K562 (cell line): ENCODE measurements at regions of chr17 and their contacts with region 1.

Region 1: GRCh38 chr17:78019367-78019975 is 61.0 kb downstream of the TNRC6C start:
- DNase-seq: peak in 2 of 4 experiments; percentile 23 to 66
- ATAC-seq: peak; percentile 64
- H3K4me3 ChIP-seq: no peak overlapping the region
- H3K27ac ChIP-seq: no peak overlapping the region; the same call in 2 of the 3 replicates
- H3K4me1 ChIP-seq: peaks cover 11 to 34% of the 10 kb centered on the region in 2 experiments; a peak in 4 of 5 replicates
- H3K27me3 ChIP-seq: no peaks in the 10 kb centered on the region
- CTCF ChIP-seq: peak; percentile 38 to 83 (median 60); a peak in 4 of 6 replicates
- EP300 ChIP-seq: 0 out of 2 replicates have a peak, but pooled peaks have one; percentile 5
- POLR2A ChIP-seq: no peak
- RAD21 ChIP-seq: peak; percentile 67 to 82

Region 2: DNA sequence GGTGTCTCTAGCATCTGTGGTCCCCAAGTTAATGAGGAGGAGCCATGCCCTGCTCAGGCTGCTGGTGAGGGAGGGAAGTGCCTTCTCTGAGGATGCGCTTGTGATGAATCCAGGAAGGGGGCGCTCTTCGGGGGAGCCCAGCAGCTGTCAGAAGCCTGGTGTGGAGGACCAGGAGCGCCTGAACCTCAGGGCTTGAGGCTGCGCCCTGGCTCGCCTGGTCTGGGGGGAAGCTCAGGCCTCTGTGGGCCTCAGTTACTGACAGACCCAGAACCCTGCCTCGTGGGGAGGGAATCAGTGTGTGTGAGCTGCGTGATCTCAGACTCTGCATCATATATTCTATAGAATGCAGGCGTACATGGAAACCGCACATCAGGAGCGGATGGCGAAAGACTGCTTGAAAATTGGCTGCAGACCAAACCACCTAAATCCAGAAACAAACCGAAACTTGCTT is 752.6 kb before region 1 on chr17:
- CTCF ChIA-PET with region 1: no interaction called
- POLR2A ChIA-PET with region 1: no interaction called
- in situ Hi-C with region 1: no loop called
- intact Hi-C with region 1: no loop called
- DNase-seq: peak; percentile 57 to 74 (median 64)
- ATAC-seq: peak; percentile 96
- H3K4me3 ChIP-seq: no peak overlapping the region
- H3K27ac ChIP-seq: no peak overlapping the region
- H3K4me1 ChIP-seq: peaks cover 0 to 10% of the 10 kb centered on the region in 2 experiments; a peak in 2 of 5 replicates
- H3K27me3 ChIP-seq: peaks cover 5 to 19% of the 10 kb centered on the region in 2 experiments; a peak in 4 of 5 replicates
- CTCF ChIP-seq: peak; percentile 70 to 86 (median 82)
- EP300 ChIP-seq: no peak
- POLR2A ChIP-seq: no peak
- RAD21 ChIP-seq: peak in 1 of 2 experiments; percentile 51; a peak in 2 of 4 replicates

Region 3: DNA sequence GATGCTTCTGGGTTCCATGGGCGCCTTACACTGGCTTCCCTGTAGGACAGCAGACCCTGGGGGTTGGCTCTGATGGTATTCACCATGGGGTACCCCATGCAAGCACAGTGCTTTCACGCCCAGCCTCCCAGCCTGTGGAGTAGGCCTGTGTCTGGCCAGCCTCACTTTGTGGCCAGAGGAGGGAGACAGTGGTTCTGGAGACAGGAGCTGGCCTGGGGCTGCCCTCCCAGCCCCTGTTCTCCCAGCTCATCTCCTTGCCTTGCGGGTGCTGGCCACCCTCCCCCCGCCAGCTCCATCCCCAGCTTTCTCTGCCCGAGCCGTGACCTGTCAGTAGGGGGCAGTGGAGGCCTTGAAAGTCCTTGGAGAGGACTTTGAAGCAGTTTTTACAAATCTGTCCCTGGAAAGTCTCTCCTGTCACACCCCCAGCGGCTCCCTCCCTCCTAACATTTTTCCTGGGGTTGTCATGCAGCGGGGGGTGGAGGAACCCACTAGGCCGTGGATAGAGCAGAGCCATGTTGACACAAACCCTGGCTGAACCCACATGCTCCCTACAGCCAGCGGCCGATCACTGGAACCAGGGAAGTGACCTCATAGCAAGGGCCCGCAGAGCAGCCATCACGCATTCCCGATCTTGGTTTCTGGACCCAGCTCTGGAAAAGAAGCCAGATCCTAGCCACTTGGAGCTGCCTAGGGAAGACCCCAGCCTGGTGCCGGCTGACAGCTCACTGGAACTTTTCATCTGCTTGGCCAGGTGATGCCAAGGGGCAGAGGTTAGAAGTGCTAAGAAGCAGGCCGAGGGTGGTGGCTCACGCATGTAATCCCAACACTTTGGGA is 589.3 kb before region 1 on chr17:
- CTCF ChIA-PET with region 1: no interaction called
- POLR2A ChIA-PET with region 1: no interaction called
- in situ Hi-C with region 1: no loop called
- intact Hi-C with region 1: no loop called
- DNase-seq: peak; percentile 79 to 88 (median 81)
- ATAC-seq: peak; percentile 83
- H3K4me3 ChIP-seq: no peak overlapping the region
- H3K27ac ChIP-seq: no peak overlapping the region
- H3K4me1 ChIP-seq: peaks cover 37 to 68% of the 10 kb centered on the region in 2 experiments
- H3K27me3 ChIP-seq: no peaks in the 10 kb centered on the region
- CTCF ChIP-seq: peak; percentile 84 to 88 (median 87)
- EP300 ChIP-seq: 0 out of 2 replicates have a peak, but pooled peaks have one; percentile 30
- POLR2A ChIP-seq: no peak
- RAD21 ChIP-seq: peak; percentile 81 to 87

Region 4: GRCh38 chr17:77692571-77693161 is 326.8 kb before region 1 on chr17:
- CTCF ChIA-PET with region 1: no interaction called
- POLR2A ChIA-PET with region 1: no interaction called
- in situ Hi-C with region 1: no loop called
- intact Hi-C with region 1: no loop called
- DNase-seq: no peak
- ATAC-seq: no peak
- H3K4me3 ChIP-seq: no peak overlapping the region
- H3K27ac ChIP-seq: no peak overlapping the region
- H3K4me1 ChIP-seq: no peaks in the 10 kb centered on the region
- H3K27me3 ChIP-seq: peaks cover 39 to 72% of the 10 kb centered on the region in 2 experiments
- CTCF ChIP-seq: no peak
- EP300 ChIP-seq: no peak
- POLR2A ChIP-seq: no peak
- RAD21 ChIP-seq: no peak

Region 5: DNA sequence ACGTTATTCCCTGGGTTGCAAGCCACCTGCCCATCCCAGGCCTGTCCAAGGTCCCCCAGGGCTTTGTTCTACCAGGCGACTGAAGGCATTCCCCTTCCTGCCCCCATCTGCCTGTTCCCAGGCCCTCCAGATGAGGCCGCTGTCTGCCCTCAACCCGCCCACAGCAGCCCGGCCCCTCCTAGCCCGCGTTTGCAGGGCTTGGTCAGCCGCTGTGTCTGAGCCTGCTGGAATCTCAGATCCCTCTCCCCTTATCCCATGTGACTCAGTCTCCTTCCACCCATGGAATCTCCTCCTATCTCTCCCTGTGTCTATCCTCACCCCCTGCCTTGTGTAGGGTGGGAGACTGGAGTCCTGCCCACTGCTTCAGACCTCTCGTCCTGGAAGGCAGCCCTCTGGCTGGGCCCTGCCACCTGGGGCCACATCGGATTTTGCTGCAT is 247.0 kb before region 1 on chr17:
- CTCF ChIA-PET with region 1: interaction called, 19 read pairs
- POLR2A ChIA-PET with region 1: no interaction called
- in situ Hi-C with region 1: loop called (anchors 5 kb)
- intact Hi-C with region 1: no loop called
- DNase-seq: peak; percentile 76 to 89 (median 84)
- ATAC-seq: peak; percentile 98
- H3K4me3 ChIP-seq: no peak overlapping the region
- H3K27ac ChIP-seq: no peak overlapping the region
- H3K4me1 ChIP-seq: peaks cover 12 to 25% of the 10 kb centered on the region in 2 experiments; a peak in 4 of 5 replicates
- H3K27me3 ChIP-seq: peaks cover 11 to 51% of the 10 kb centered on the region in 2 experiments
- CTCF ChIP-seq: peak; percentile 89 to 93 (median 90)
- EP300 ChIP-seq: no peak
- POLR2A ChIP-seq: no peak
- RAD21 ChIP-seq: peak; percentile 74 to 91

Region 6: GRCh38 chr17:77846531-77847085 is 172.9 kb before region 1 on chr17:
- CTCF ChIA-PET with region 1: no interaction called
- POLR2A ChIA-PET with region 1: no interaction called
- in situ Hi-C with region 1: no loop called
- intact Hi-C with region 1: loop called (anchors 5 kb)
- DNase-seq: no peak
- ATAC-seq: no peak; the same call in 2 of the 3 replicates
- H3K4me3 ChIP-seq: no peak overlapping the region
- H3K27ac ChIP-seq: no peak overlapping the region
- H3K4me1 ChIP-seq: peaks cover 5 to 6% of the 10 kb centered on the region in 2 experiments
- H3K27me3 ChIP-seq: peaks cover 0 to 7% of the 10 kb centered on the region in 2 experiments; a peak in 3 of 5 replicates
- CTCF ChIP-seq: no peak
- EP300 ChIP-seq: no peak
- POLR2A ChIP-seq: no peak
- RAD21 ChIP-seq: no peak

Region 7: GRCh38 chr17:78082988-78083387 is 63.5 kb after region 1 on chr17:
- CTCF ChIA-PET with region 1: no interaction called
- POLR2A ChIA-PET with region 1: no interaction called
- in situ Hi-C with region 1: no loop called
- intact Hi-C with region 1: loop called (anchors 1 kb)
- DNase-seq: peak in 1 of 4 experiments; percentile 29
- ATAC-seq: no peak
- H3K4me3 ChIP-seq: no peak overlapping the region
- H3K27ac ChIP-seq: 0 out of 3 replicates have a peak overlapping the region, but pooled peaks have one; percentile 20
- H3K4me1 ChIP-seq: peaks cover 21 to 23% of the 10 kb centered on the region in 2 experiments; a peak in 4 of 5 replicates
- H3K27me3 ChIP-seq: no peaks in the 10 kb centered on the region
- CTCF ChIP-seq: no peak
- EP300 ChIP-seq: no peak
- POLR2A ChIP-seq: no peak
- RAD21 ChIP-seq: no peak

Region 8: DNA sequence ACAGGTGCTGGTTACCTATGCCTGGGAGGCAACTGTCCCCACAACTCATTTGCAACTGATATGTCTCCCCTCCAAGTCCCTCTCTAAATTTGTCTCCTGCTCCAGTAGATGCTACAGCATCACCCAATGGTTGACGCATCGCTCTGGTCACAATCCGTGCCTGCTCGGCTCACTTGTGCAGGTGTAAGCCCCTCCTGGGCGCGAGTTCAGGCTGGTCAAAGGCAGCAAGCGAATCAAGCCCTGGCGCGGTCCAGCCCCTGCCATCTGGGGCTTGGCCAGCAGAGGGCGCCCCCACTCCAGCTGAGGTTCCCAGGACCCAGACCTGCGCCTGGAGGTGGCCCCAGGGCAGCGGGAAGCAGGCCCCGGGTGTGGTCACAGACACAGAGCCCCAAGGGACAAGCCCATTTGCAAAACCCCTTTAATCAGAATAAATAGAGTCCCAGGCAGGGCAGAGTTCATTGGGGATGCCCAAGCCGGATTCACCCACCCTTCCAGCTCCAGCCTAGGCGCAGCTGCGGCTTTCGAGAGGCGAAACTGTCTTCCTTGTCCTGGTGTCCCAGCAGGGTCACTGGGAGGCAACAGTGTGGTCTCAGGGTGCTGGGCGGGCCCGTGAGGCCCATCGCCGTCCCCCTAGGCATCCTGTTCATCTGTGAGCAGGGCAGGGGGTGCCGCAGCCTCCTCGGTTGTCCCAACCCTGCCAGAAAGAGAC is 93.2 kb after region 1 on chr17:
- CTCF ChIA-PET with region 1: no interaction called
- POLR2A ChIA-PET with region 1: interaction called, 3 read pairs
- in situ Hi-C with region 1: no loop called
- intact Hi-C with region 1: loop called (anchors 1 kb)
- DNase-seq: peak; percentile 80 to 88 (median 84)
- ATAC-seq: peak; percentile 92
- H3K4me3 ChIP-seq: no peak overlapping the region
- H3K27ac ChIP-seq: 0 out of 3 replicates have a peak overlapping the region, but pooled peaks have one; percentile 34
- H3K4me1 ChIP-seq: peaks cover 0 to 52% of the 10 kb centered on the region in 2 experiments; a peak in 2 of 5 replicates
- H3K27me3 ChIP-seq: no peaks in the 10 kb centered on the region
- CTCF ChIP-seq: peak; percentile 94 to 97 (median 95)
- EP300 ChIP-seq: no peak
- POLR2A ChIP-seq: peak; percentile 75
- RAD21 ChIP-seq: peak; percentile 93

Region 9: DNA sequence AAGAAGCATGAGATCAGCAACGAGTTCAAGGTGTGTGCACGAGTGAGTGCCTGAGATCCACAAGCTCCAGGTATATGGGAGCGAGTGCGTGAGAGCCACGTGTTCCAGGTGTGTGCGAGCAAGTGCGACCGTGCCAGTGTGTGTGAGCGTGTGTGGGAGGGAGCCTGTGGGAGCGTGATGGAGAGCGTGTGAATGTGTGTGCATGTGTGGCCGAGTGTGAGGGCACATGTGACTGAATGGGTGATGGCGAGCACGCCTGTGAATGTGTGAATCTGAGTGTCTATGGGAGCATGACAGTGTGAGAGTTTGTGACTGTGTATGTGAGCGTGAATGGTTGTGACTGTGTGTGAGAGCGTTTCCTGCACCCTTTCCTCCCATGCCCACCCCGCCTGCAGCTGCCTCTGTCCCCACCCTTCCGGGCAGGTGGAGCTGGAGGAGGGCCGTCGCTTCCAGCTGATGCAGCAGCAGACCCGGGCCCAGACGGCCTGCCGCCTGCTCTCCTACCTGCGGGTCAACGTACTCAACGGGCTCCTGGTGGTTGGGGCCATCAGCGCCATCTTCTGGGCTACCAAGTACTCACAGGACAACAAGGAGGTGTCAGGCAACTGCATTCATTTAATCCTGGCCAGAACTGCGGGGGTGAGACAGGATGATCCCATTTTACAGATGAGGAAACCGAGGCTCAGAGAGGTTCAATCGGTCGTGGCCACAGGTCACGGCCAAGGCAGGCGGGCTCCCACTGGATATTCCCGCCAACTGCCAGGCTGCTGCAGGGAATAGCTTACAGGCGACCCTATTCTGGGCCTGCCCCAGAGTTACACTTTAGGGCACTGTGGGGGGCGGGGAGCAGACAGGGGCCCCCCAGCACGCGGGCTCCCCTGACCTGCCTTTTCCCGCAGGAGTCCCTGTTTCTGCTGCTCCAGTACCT is 114.8 kb after region 1 on chr17:
- CTCF ChIA-PET with region 1: interaction called, 3 read pairs
- POLR2A ChIA-PET with region 1: no interaction called
- in situ Hi-C with region 1: no loop called
- intact Hi-C with region 1: loop called (anchors 2 kb)
- DNase-seq: peak; percentile 52 to 88 (median 64)
- ATAC-seq: peak; percentile 59
- H3K4me3 ChIP-seq: no peak overlapping the region
- H3K27ac ChIP-seq: no peak overlapping the region
- H3K4me1 ChIP-seq: peaks cover 70 to 100% of the 10 kb centered on the region in 2 experiments
- H3K27me3 ChIP-seq: no peaks in the 10 kb centered on the region
- CTCF ChIP-seq: peak; percentile 80 to 84 (median 81)
- EP300 ChIP-seq: no peak
- POLR2A ChIP-seq: no peak
- RAD21 ChIP-seq: peak; percentile 41 to 73; a peak in 3 of 4 replicates

Region 10: DNA sequence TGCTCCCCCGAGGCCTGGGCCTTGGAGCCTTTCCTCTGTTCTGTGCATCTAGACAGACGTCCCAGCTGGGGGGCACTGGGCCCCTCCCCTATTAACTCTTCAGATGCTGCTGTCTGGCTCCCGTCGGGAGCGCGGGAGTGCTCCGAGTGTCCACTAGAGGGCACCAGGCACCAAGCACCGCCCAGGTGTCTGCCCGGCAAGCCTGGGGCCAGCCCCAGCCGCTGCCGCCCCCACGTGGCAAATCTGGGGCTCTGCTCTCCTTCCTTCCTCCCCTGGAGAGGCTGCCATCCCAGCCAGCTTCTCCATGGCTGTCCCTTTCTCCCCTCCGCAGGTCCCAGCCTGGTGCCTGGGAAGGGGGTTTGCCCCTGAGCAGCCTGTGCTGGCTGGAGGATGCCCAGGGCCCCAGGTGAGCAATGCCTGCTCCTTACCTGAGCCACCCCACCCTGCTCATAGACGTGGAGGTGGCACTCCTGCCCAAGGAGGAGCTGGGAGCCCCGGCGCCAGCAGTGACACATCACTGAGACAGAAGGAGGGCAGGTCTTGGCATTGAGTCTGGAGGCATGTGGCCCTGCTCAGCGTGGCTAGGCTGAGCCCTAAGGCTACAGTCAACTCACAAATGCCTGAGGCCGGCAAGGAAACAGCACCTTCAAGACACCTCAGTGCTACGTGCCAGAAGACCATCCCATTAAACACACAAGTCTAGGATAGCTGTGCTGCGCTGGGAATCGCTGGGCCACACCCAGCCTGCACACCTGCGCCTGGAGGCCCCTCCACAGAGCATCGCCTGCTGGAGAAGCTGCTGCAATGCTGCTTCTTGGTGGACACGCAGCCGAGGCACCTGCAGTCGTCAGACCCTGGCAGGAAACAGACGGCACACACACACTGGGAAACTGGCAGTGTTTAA is 231.7 kb after region 1 on chr17:
- CTCF ChIA-PET with region 1: interaction called, 11 read pairs
- POLR2A ChIA-PET with region 1: no interaction called
- in situ Hi-C with region 1: no loop called
- intact Hi-C with region 1: no loop called
- DNase-seq: peak; percentile 90 to 94 (median 92)
- ATAC-seq: peak; percentile 87
- H3K4me3 ChIP-seq: no peak overlapping the region
- H3K27ac ChIP-seq: no peak overlapping the region
- H3K4me1 ChIP-seq: peaks cover 32 to 80% of the 10 kb centered on the region in 2 experiments
- H3K27me3 ChIP-seq: no peaks in the 10 kb centered on the region
- CTCF ChIP-seq: peak; percentile 99 to 100 (median 100)
- EP300 ChIP-seq: no peak; the same call in 1 of the 2 replicates
- POLR2A ChIP-seq: no peak
- RAD21 ChIP-seq: peak; percentile 96 to 99